Heart left ventricle (tissue), 16 donors: ENCODE measurements at regions of chr1 and their contacts with region 1.

Region 1: GRCh38 chr1:91885716-91886506 is at the start of gene TGFBR3:
- DNase-seq: peak; percentile 93 to 96 (median 95)
- ATAC-seq: peak; percentile 95 to 97 (median 96)
- H3K4me3 ChIP-seq: peak within 1 kb of the TSS; percentile 70 to 100 (median 92)
- H3K27ac ChIP-seq: peak within 1 kb of the TSS; percentile 85 to 98 (median 94)
- H3K4me1 ChIP-seq: peaks cover 0 to 42% (median 17%) of the 10 kb centered on the region in 12 donors
- H3K27me3 ChIP-seq: peaks cover 0 to 29% (median 0%) of the 10 kb centered on the region in 9 donors
- CTCF ChIP-seq: peak; percentile 26 to 74 (median 54)
- POLR2A ChIP-seq: peak in 1 of 2 donors; percentile 89
- total RNA-seq, gene TGFBR3: 10.3 to 51.8 (median 28.1) TPM

Region 2: DNA sequence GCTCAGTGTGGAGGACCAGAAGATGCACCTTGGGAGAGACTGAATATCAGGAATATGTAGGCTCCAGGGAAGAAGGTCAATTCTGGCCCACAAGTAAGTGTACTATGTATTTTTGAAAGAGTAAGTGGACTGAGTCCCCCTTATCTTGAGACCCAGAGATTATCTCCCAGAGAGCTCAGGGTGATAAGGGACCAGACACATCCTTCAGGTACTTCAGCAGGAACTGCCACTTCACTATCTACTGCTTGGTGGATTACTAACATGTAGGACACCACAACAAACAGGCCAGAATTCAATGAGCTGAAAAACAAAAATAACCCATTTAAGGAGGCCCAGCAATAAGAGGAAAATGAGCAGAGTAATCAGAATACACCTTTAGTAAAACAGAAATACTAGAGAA is 983.2 kb before region 1 on chr1:
- intact Hi-C with region 1: no loop called
- DNase-seq: no peak
- ATAC-seq: no peak
- H3K4me3 ChIP-seq: no peak overlapping the region
- H3K27ac ChIP-seq: no peak overlapping the region
- H3K4me1 ChIP-seq: no peaks in the 10 kb centered on the region
- H3K27me3 ChIP-seq: no peaks in the 10 kb centered on the region
- CTCF ChIP-seq: no peak
- POLR2A ChIP-seq: no peak

Region 3: DNA sequence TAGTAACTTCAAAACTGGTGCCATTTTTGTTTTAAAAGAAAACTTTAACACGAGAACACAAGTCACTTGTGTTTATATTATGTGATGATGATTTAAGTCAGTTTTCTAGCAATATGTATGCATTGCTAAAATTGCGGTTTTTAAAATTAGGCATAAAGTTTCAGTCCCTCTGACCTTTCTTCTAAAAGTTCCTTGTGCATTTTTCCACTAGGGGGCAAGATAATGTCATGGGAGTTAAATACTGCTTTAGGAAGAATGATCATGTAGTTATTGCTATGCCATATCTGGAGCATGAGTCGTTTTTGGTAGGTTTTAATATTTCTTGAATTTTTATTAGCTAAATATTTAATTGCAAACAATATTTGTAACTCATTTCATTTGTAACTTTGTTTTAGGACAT is 374.5 kb before region 1 on chr1:
- intact Hi-C with region 1: loop called in 1 of 10 experiments (anchors 5 kb)
- DNase-seq: no peak
- ATAC-seq: peak in 1 of 4 donors; percentile 58
- H3K4me3 ChIP-seq: no peak overlapping the region
- H3K27ac ChIP-seq: no peak overlapping the region
- H3K4me1 ChIP-seq: no peaks in the 10 kb centered on the region
- H3K27me3 ChIP-seq: no peaks in the 10 kb centered on the region
- CTCF ChIP-seq: peak; percentile 53 to 78 (median 60)
- POLR2A ChIP-seq: no peak

Region 4: DNA sequence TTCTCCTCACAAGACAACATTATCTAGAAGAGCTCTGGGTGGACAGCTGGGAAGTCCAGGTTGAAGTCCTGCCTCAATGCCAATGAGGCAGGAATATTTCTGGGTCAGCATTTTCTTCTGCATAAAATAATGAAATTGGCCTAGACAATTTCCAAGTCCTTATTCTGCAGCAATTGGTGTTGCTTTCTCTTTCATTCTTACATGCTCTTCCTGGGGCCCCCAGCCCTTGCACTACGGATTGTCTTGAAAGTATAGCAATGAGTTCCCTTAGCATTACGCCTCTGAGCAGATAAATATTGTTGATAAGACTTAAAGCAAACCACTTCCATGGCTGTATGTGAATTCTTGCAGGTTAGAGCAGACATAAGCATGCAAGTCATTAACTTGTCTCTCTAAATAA is 188.5 kb before region 1 on chr1:
- intact Hi-C with region 1: loop called in 2 of 10 experiments (anchors 5 to 10 kb)
- DNase-seq: no peak
- ATAC-seq: no peak
- H3K4me3 ChIP-seq: no peak overlapping the region
- H3K27ac ChIP-seq: peak overlapping the region in 6 of 12 donors; percentile 23 to 78 (median 34)
- H3K4me1 ChIP-seq: peaks cover 0 to 85% (median 49%) of the 10 kb centered on the region in 12 donors
- H3K27me3 ChIP-seq: no peaks in the 10 kb centered on the region
- CTCF ChIP-seq: no peak
- POLR2A ChIP-seq: no peak

Region 5: GRCh38 chr1:91754348-91754747 is 131.6 kb before region 1 on chr1:
- intact Hi-C with region 1: loop called in 1 of 10 experiments (anchors 5 kb)
- DNase-seq: no peak
- ATAC-seq: no peak
- H3K4me3 ChIP-seq: no peak overlapping the region
- H3K27ac ChIP-seq: peak overlapping the region in 10 of 12 donors; percentile 18 to 73 (median 58)
- H3K4me1 ChIP-seq: peaks cover 0 to 64% (median 31%) of the 10 kb centered on the region in 12 donors
- H3K27me3 ChIP-seq: no peaks in the 10 kb centered on the region
- CTCF ChIP-seq: no peak
- POLR2A ChIP-seq: no peak

Region 6: GRCh38 chr1:91830242-91831131 is 55.4 kb before region 1 on chr1:
- intact Hi-C with region 1: loop called in 5 of 10 experiments (anchors 1 to 10 kb)
- DNase-seq: peak; percentile 69 to 86 (median 81)
- ATAC-seq: peak; percentile 75 to 80 (median 76)
- H3K4me3 ChIP-seq: peak overlapping the region in 1 of 12 donors; percentile 11
- H3K27ac ChIP-seq: peak overlapping the region; percentile 33 to 94 (median 84)
- H3K4me1 ChIP-seq: peaks cover 3 to 57% (median 39%) of the 10 kb centered on the region in 12 donors
- H3K27me3 ChIP-seq: no peaks in the 10 kb centered on the region
- CTCF ChIP-seq: peak in 10 of 12 donors; percentile 21 to 64 (median 48)
- POLR2A ChIP-seq: no peak

Region 7: GRCh38 chr1:91929250-91929649 is 43.3 kb after region 1 on chr1:
- intact Hi-C with region 1: loop called in 1 of 10 experiments (anchors 5 kb)
- DNase-seq: no peak
- ATAC-seq: peak in 2 of 4 donors; percentile 30 to 58
- H3K4me3 ChIP-seq: no peak overlapping the region
- H3K27ac ChIP-seq: no peak overlapping the region
- H3K4me1 ChIP-seq: peaks cover 0 to 7% (median 0%) of the 10 kb centered on the region in 12 donors
- H3K27me3 ChIP-seq: no peaks in the 10 kb centered on the region
- CTCF ChIP-seq: no peak
- POLR2A ChIP-seq: no peak